ENCODE measurements at regions of chr6 and their contacts with region 1.

Region 1: GRCh38 chr6:138987640-138988468 is at the start of gene REPS1:
- DNase-seq: peak; percentile 81 to 94 (median 88)
- ATAC-seq: peak; percentile 82
- H3K4me3 ChIP-seq: peak within 1 kb of the TSS; percentile 77
- H3K4me3 Mint-ChIP-seq: peak within 1 kb of the TSS; percentile 90
- H3K27ac ChIP-seq: peak within 1 kb of the TSS; percentile 53 to 54
- H3K27ac Mint-ChIP-seq: peak within 1 kb of the TSS; percentile 89
- H3K4me1 ChIP-seq: peaks cover 36% of the 10 kb centered on the region
- H3K4me1 Mint-ChIP-seq: peaks cover 8% of the 10 kb centered on the region
- H3K27me3 ChIP-seq: no peaks in the 10 kb centered on the region
- H3K27me3 Mint-ChIP-seq: no peaks in the 10 kb centered on the region
- CTCF ChIP-seq: peak; percentile 99
- total RNA-seq, gene REPS1: 54.0 to 56.6 TPM

Region 2: GRCh38 chr6:138115877-138116660 is 871.8 kb before region 1 on chr6:
- CTCF ChIA-PET with region 1: no interaction called
- POLR2A ChIA-PET with region 1: no interaction called
- intact Hi-C with region 1: loop called in 1 of 2 experiments (anchors 10 kb)
- DNase-seq: peak in 11 of 14 experiments; percentile 13 to 83 (median 32)
- ATAC-seq: peak; percentile 91
- H3K4me3 ChIP-seq: no peak overlapping the region
- H3K4me3 Mint-ChIP-seq: no peak overlapping the region
- H3K27ac ChIP-seq: no peak overlapping the region
- H3K27ac Mint-ChIP-seq: no peak overlapping the region
- H3K4me1 ChIP-seq: no peaks in the 10 kb centered on the region
- H3K4me1 Mint-ChIP-seq: peaks cover 6% of the 10 kb centered on the region
- H3K27me3 ChIP-seq: no peaks in the 10 kb centered on the region
- H3K27me3 Mint-ChIP-seq: peaks cover 32% of the 10 kb centered on the region
- CTCF ChIP-seq: peak; percentile 90

Region 3: DNA sequence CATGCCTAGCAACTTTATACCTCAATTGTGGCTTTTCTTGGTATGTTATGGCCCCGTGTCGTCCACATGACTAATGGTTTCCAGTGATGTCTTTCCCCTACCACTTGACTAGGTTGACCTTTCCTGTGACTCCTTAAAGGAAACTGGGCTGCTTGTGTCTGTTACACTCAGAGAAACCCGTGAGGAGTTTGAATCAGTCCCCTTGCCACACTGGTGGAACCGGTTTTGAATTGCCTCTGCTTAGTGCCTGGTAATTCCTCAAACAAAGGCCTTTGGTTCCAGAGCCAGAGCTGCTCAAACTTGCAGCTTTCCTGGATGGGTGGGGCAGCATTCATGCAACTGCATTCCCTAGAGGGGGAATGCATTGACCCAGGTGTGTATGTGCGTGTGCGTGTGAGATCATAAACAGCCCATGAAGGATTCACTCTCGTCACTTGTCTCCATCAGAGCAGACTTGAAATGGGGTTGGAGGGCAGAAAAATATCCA is 170.0 kb before region 1 on chr6:
- CTCF ChIA-PET with region 1: interaction called, 3 read pairs
- POLR2A ChIA-PET with region 1: no interaction called
- intact Hi-C with region 1: loop called (anchors 1 to 2 kb)
- DNase-seq: no peak
- ATAC-seq: no peak
- H3K4me3 ChIP-seq: no peak overlapping the region
- H3K4me3 Mint-ChIP-seq: no peak overlapping the region
- H3K27ac ChIP-seq: no peak overlapping the region
- H3K27ac Mint-ChIP-seq: no peak overlapping the region
- H3K4me1 ChIP-seq: no peaks in the 10 kb centered on the region
- H3K4me1 Mint-ChIP-seq: peaks cover 6% of the 10 kb centered on the region
- H3K27me3 ChIP-seq: no peaks in the 10 kb centered on the region
- H3K27me3 Mint-ChIP-seq: no peaks in the 10 kb centered on the region
- CTCF ChIP-seq: no peak

Region 4: DNA sequence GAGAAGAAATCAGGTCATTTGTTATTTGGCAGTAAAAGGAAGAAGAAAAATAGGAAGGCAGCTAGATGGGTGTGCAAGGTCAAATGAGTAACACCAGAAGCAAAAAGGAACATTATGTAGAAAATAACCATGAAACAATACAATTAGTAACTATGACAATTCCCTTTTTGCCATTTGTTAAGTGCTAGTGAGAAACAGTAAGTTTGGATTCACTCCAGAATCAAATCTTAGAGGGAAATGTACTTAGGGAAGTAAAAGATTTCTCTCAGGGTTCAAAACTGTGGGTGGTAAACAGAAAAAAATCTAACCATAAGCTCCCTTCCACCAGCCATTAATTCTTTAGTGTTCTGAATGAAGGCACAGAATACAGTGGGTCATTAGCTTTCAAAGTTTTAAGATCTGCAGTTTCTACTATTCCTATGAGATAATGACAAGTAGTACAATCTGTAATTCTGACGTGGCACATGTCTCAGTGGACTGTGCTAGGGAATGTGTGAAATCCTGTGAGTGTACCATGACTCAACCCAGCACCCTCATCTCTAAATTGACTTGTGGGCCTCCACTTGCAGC is 16.9 kb before region 1 on chr6:
- CTCF ChIA-PET with region 1: interaction called, 7 read pairs
- POLR2A ChIA-PET with region 1: interaction called, 4 read pairs
- intact Hi-C with region 1: loop called in 1 of 2 experiments (anchors 2 kb)
- DNase-seq: peak in 4 of 14 experiments; percentile 27 to 57 (median 34)
- ATAC-seq: no peak
- H3K4me3 ChIP-seq: no peak overlapping the region
- H3K4me3 Mint-ChIP-seq: no peak overlapping the region
- H3K27ac ChIP-seq: no peak overlapping the region
- H3K27ac Mint-ChIP-seq: no peak overlapping the region
- H3K4me1 ChIP-seq: peaks cover 22% of the 10 kb centered on the region
- H3K4me1 Mint-ChIP-seq: peaks cover 88% of the 10 kb centered on the region
- H3K27me3 ChIP-seq: no peaks in the 10 kb centered on the region
- H3K27me3 Mint-ChIP-seq: no peaks in the 10 kb centered on the region
- CTCF ChIP-seq: no peak

Region 5: GRCh38 chr6:139109558-139109957 is 121.7 kb after region 1 on chr6:
- CTCF ChIA-PET with region 1: no interaction called
- POLR2A ChIA-PET with region 1: interaction called, 19 read pairs
- intact Hi-C with region 1: no loop called
- DNase-seq: peak in 6 of 14 experiments; percentile 14 to 62 (median 43)
- ATAC-seq: no peak
- H3K4me3 ChIP-seq: no peak overlapping the region
- H3K4me3 Mint-ChIP-seq: no peak overlapping the region
- H3K27ac ChIP-seq: no peak overlapping the region
- H3K27ac Mint-ChIP-seq: peak overlapping the region; percentile 83
- H3K4me1 ChIP-seq: peaks cover 36% of the 10 kb centered on the region
- H3K4me1 Mint-ChIP-seq: peaks cover 59% of the 10 kb centered on the region
- H3K27me3 ChIP-seq: no peaks in the 10 kb centered on the region
- H3K27me3 Mint-ChIP-seq: no peaks in the 10 kb centered on the region
- CTCF ChIP-seq: peak; percentile 26

Region 6: GRCh38 chr6:139173172-139173571 is 185.3 kb after region 1 on chr6:
- CTCF ChIA-PET with region 1: interaction called, 3 read pairs
- POLR2A ChIA-PET with region 1: no interaction called
- intact Hi-C with region 1: loop called in 1 of 2 experiments (anchors 5 kb)
- DNase-seq: peak in 4 of 14 experiments; percentile 42 to 70 (median 54)
- ATAC-seq: peak; percentile 71
- H3K4me3 ChIP-seq: no peak overlapping the region
- H3K4me3 Mint-ChIP-seq: peak overlapping the region; percentile 40
- H3K27ac ChIP-seq: peak overlapping the region; percentile 31 to 49
- H3K27ac Mint-ChIP-seq: peak overlapping the region; percentile 48
- H3K4me1 ChIP-seq: peaks cover 69% of the 10 kb centered on the region
- H3K4me1 Mint-ChIP-seq: peaks cover 95% of the 10 kb centered on the region
- H3K27me3 ChIP-seq: no peaks in the 10 kb centered on the region
- H3K27me3 Mint-ChIP-seq: no peaks in the 10 kb centered on the region
- CTCF ChIP-seq: peak; percentile 39

Measured in CD4-positive, alpha-beta T cell (primary cell).